Esophagus squamous epithelium (tissue), 5 donors: ENCODE measurements at regions of chr1 and their contacts with region 1.

Region 1: DNA sequence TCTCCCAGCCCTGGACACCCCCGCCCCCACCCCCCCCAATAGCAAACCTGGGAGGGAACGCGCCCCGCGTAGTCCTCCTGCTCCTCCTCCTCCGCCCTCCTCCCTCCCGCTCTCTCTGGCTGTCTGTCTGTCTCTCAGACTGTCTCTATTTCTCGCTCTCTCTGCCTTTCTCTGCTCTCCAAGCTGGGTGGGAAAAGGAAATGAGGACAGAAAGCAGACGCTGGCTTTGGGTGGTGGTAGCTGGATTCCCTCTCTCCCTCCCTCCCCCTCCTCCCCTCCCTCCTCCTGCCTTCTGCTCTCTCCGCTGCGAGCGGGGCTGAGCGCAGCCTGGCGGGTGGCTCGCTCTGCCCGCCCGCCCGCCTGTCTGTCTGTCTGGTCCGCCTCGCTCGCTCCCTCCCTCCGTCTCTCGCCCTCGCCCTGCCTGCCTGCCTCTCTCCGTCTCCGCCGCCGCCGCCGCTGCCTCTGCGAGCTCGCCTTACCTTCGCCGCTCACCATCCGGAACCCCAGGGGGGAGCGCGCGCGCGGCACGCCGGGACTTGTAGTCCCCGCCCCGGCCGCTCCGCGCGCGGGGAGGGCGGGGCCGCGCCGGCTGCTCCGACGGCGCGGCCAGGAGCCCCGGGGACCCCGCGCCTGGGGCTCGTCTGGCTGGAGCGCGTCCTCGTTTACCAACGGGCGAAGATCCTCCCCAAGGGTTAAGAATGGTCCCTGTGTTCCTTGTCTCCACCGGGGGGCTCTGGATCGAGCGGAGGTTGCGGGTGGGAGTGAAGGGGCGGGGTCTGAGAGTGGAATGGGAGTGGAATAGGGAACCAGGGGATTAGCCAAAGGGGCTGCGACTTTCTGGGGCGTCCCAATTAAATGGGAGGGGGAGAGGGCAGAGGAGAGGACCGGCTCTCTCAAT is at the start of gene AHDC1:
- DNase-seq: peak; percentile 63
- H3K4me3 ChIP-seq: peak within 1 kb of the TSS; percentile 94 to 98 (median 97)
- H3K27ac ChIP-seq: peak within 1 kb of the TSS; percentile 97 to 99 (median 98)
- H3K4me1 ChIP-seq: peaks cover 51 to 74% (median 57%) of the 10 kb centered on the region in 3 donors
- H3K27me3 ChIP-seq: no peaks in the 10 kb centered on the region
- CTCF ChIP-seq: peak in 4 of 6 experiments; percentile 35 to 61 (median 50)
- POLR2A ChIP-seq: peak in 3 of 4 donors; percentile 72 to 94 (median 89)
- total RNA-seq, gene AHDC1: 22.2 to 112 (median 30.6) TPM

Region 2: GRCh38 chr1:27300341-27301051 is 303.4 kb before region 1 on chr1:
- intact Hi-C with region 1: loop called (anchors 5 kb)
- DNase-seq: peak; percentile 19
- H3K4me3 ChIP-seq: no peak overlapping the region
- H3K27ac ChIP-seq: peak overlapping the region; percentile 67 to 94 (median 90)
- H3K4me1 ChIP-seq: peaks cover 23 to 56% (median 35%) of the 10 kb centered on the region in 3 donors
- H3K27me3 ChIP-seq: no peaks in the 10 kb centered on the region
- CTCF ChIP-seq: peak; percentile 99 to 100 (median 99)
- POLR2A ChIP-seq: no peak

Region 3: DNA sequence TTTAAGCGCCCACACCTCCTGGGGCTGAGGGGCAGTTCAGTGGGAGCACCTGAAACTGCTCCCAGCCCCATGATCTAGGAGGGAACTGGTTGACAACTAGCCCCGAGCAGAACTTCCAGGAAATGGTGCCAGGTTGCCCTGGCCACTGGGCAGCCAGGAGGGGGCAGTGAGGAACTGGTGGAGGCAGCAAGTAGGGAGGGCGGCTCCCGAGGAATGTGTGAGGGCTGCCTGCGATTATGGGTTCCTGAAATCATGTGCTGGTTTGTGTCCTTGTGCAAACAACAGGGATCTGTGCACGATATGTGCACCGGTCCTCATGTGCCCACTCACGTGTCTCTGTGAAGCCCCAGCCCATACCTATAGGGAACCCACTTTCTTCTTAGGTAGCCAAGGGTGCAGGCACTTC is 201.6 kb before region 1 on chr1:
- intact Hi-C with region 1: loop called (anchors 10 kb)
- DNase-seq: no peak
- H3K4me3 ChIP-seq: no peak overlapping the region
- H3K27ac ChIP-seq: peak overlapping the region; percentile 79 to 92 (median 90)
- H3K4me1 ChIP-seq: peaks cover 55 to 100% (median 56%) of the 10 kb centered on the region in 3 donors
- H3K27me3 ChIP-seq: no peaks in the 10 kb centered on the region
- CTCF ChIP-seq: peak; percentile 50 to 75 (median 62)
- POLR2A ChIP-seq: no peak

Region 4: GRCh38 chr1:27428316-27429028 is 175.5 kb before region 1 on chr1:
- intact Hi-C with region 1: loop called (anchors 5 kb)
- DNase-seq: no peak
- H3K4me3 ChIP-seq: peak overlapping the region in 3 of 4 donors; percentile 8 to 56 (median 33)
- H3K27ac ChIP-seq: peak overlapping the region; percentile 65 to 84 (median 84)
- H3K4me1 ChIP-seq: peaks cover 49 to 99% (median 53%) of the 10 kb centered on the region in 3 donors
- H3K27me3 ChIP-seq: no peaks in the 10 kb centered on the region
- CTCF ChIP-seq: no peak
- POLR2A ChIP-seq: no peak

Region 5: GRCh38 chr1:27556781-27557595 is 46.9 kb before region 1 on chr1:
- intact Hi-C with region 1: loop called (anchors 5 kb)
- DNase-seq: peak; percentile 54
- H3K4me3 ChIP-seq: peak overlapping the region in 3 of 4 donors; percentile 10 to 53 (median 20)
- H3K27ac ChIP-seq: peak overlapping the region; percentile 82 to 96 (median 94)
- H3K4me1 ChIP-seq: peaks cover 67 to 87% (median 69%) of the 10 kb centered on the region in 3 donors
- H3K27me3 ChIP-seq: no peaks in the 10 kb centered on the region
- CTCF ChIP-seq: peak; percentile 82 to 98 (median 92)
- POLR2A ChIP-seq: no peak